ENCODE measurements at regions of chr18 and their contacts with region 1.

Region 1: GRCh38 chr18:1676387-1676786 is 771.7 kb downstream of the ADCYAP1 start:
- DNase-seq: no peak
- ATAC-seq: no peak
- H3K4me3 ChIP-seq: no peak overlapping the region
- H3K27ac ChIP-seq: no peak overlapping the region
- H3K4me1 ChIP-seq: no peaks in the 10 kb centered on the region
- H3K27me3 ChIP-seq: peaks cover 40% of the 10 kb centered on the region
- CTCF ChIP-seq: no peak

Region 2: GRCh38 chr18:923141-923866 is 753.1 kb before region 1 on chr18:
- CTCF ChIA-PET with region 1: interaction called, 10 read pairs
- POLR2A ChIA-PET with region 1: no interaction called
- intact Hi-C with region 1: no loop called
- DNase-seq: no peak
- ATAC-seq: no peak
- H3K4me3 ChIP-seq: no peak overlapping the region
- H3K27ac ChIP-seq: no peak overlapping the region
- H3K4me1 ChIP-seq: no peaks in the 10 kb centered on the region
- H3K27me3 ChIP-seq: peaks cover 33% of the 10 kb centered on the region
- CTCF ChIP-seq: no peak

Measured in PC-3 (cell line).